ENCODE measurements at regions of chr7 and their contacts with region 1.

Region 1: GRCh38 chr7:79272066-79272669 is 181.3 kb downstream of the MAGI2 start:
- DNase-seq: peak in 1 of 2 experiments; percentile 29
- H3K4me3 ChIP-seq: no peak overlapping the region
- H3K4me3 Mint-ChIP-seq: no peak overlapping the region
- H3K27ac Mint-ChIP-seq: no peak overlapping the region
- H3K4me1 ChIP-seq: peaks cover 5% of the 10 kb centered on the region; the same call in 1 of the 2 replicates
- H3K4me1 Mint-ChIP-seq: peaks cover 7% of the 10 kb centered on the region
- H3K27me3 ChIP-seq: no peaks in the 10 kb centered on the region
- H3K27me3 Mint-ChIP-seq: no peaks in the 10 kb centered on the region
- CTCF ChIP-seq: peak; percentile 66 to 72

Region 2: DNA sequence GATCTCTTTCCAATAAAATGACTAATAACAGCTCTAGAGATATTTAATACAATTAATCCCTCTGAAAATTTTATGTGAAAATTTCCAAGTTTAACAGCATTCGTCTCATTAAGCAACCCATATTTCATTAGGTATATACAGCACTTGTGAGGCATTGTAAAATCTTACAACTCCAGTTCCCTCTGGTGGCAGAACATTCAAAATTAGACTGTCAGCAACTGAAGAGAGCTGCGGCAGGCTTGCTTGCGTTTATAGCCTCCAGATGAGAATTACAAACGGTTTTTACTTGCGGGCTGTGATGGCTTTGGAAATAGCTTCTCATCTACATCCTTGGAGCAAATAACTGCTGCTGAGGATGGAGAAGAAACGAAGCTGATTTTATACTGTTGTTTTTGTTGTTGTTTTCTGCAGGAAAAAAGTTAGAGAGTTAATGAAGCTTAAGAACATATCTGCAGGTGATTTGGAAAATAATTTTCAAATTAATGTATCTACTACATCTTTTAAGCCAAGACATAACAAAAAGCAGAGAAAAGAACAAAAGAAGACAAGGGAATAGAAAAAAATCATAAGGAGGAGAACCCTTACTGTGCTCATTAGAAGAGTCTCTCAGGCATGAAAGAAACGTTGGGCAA is 10.0 kb after region 1 on chr7:
- CTCF ChIA-PET with region 1: no interaction called
- POLR2A ChIA-PET with region 1: no interaction called
- intact Hi-C with region 1: loop called (anchors 1 kb)
- DNase-seq: peak; percentile 37 to 60
- H3K4me3 ChIP-seq: no peak overlapping the region
- H3K4me3 Mint-ChIP-seq: peak overlapping the region; percentile 27
- H3K27ac Mint-ChIP-seq: peak overlapping the region; percentile 63
- H3K4me1 ChIP-seq: peaks cover 30% of the 10 kb centered on the region
- H3K4me1 Mint-ChIP-seq: peaks cover 22% of the 10 kb centered on the region
- H3K27me3 ChIP-seq: no peaks in the 10 kb centered on the region
- H3K27me3 Mint-ChIP-seq: no peaks in the 10 kb centered on the region
- CTCF ChIP-seq: peak in 1 of 2 experiments; percentile 44

Region 3: DNA sequence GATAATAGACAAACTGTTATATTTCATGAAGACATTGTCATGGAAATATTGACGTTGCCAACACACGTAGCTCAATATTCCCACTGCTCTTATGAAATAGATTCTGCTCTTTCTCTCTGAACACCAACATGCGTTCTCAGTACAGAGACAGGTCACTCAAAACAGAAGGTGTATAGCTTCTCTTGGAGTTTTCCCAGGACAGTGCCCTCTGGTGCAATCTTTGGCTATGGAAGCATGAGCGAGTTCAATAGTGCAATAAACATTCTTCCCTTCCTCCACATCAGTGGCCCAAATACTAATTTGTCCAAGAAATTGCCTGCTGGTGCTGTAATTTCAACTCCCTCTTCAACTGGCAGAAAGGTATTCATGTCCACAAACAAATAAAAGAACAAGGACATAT is 36.0 kb after region 1 on chr7:
- CTCF ChIA-PET with region 1: interaction called, 3 read pairs
- POLR2A ChIA-PET with region 1: no interaction called
- intact Hi-C with region 1: loop called (anchors 1 kb)
- DNase-seq: peak; percentile 38 to 40
- H3K4me3 ChIP-seq: no peak overlapping the region
- H3K4me3 Mint-ChIP-seq: no peak overlapping the region
- H3K27ac Mint-ChIP-seq: no peak overlapping the region
- H3K4me1 ChIP-seq: no peaks in the 10 kb centered on the region; the same call in 1 of the 2 replicates
- H3K4me1 Mint-ChIP-seq: peaks cover 14% of the 10 kb centered on the region
- H3K27me3 ChIP-seq: no peaks in the 10 kb centered on the region
- H3K27me3 Mint-ChIP-seq: no peaks in the 10 kb centered on the region
- CTCF ChIP-seq: peak; percentile 36 to 50

Region 4: GRCh38 chr7:79461660-79462059 is 189.5 kb after region 1 on chr7:
- CTCF ChIA-PET with region 1: no interaction called
- POLR2A ChIA-PET with region 1: no interaction called
- intact Hi-C with region 1: loop called (anchors 5 kb)
- DNase-seq: peak in 1 of 2 experiments; percentile 35
- H3K4me3 ChIP-seq: no peak overlapping the region
- H3K4me3 Mint-ChIP-seq: no peak overlapping the region
- H3K27ac Mint-ChIP-seq: peak overlapping the region; percentile 23
- H3K4me1 ChIP-seq: peaks cover 8% of the 10 kb centered on the region; the same call in 1 of the 2 replicates
- H3K4me1 Mint-ChIP-seq: peaks cover 16% of the 10 kb centered on the region
- H3K27me3 ChIP-seq: no peaks in the 10 kb centered on the region
- H3K27me3 Mint-ChIP-seq: no peaks in the 10 kb centered on the region
- CTCF ChIP-seq: no peak

Region 5: GRCh38 chr7:79741684-79742083 is 469.5 kb after region 1 on chr7:
- CTCF ChIA-PET with region 1: no interaction called
- POLR2A ChIA-PET with region 1: no interaction called
- intact Hi-C with region 1: loop called (anchors 1 kb)
- DNase-seq: no peak
- H3K4me3 ChIP-seq: no peak overlapping the region
- H3K4me3 Mint-ChIP-seq: no peak overlapping the region
- H3K27ac Mint-ChIP-seq: no peak overlapping the region
- H3K4me1 ChIP-seq: no peaks in the 10 kb centered on the region
- H3K4me1 Mint-ChIP-seq: no peaks in the 10 kb centered on the region
- H3K27me3 ChIP-seq: no peaks in the 10 kb centered on the region
- H3K27me3 Mint-ChIP-seq: no peaks in the 10 kb centered on the region
- CTCF ChIP-seq: peak; percentile 46 to 61

Measured in Caco-2 (cell line).